ENCODE measurements at regions of chr14 and their contacts with region 1.

Region 1: DNA sequence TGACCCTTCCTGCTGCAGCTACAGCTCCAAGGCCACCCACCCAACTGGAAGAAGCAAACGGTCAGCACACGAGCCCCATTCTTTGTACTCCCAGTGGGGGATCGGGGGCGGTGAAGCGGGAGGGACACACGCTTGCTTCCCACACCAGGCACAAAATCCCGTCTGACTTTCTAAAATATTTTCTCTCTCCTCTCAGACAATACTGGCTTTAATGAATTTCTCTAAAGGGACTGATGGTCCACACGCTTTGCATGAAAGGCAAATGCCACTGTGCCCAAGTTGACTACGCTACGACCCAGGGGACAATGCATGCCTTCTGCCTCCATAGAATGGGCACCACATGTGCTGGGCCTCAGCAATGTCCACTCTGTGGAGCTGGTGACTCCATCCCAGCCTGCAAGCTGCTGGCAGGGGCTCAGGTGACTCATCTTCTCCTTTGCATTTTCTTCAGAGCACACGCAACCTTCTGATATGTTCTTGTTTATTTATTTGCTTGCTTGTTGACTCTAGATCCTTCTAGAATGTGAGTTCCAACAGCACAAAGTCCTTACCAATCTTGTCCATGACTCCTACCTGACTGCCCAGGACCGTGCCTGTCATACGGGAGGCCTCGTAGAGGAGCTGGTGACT is 15.6 kb downstream of the SYNE3 start:
- DNase-seq: no peak
- H3K4me3 ChIP-seq: no peak overlapping the region
- H3K4me3 Mint-ChIP-seq: peak overlapping the region; percentile 18
- H3K27ac Mint-ChIP-seq: peak overlapping the region; percentile 3
- H3K4me1 ChIP-seq: peaks cover 71% of the 10 kb centered on the region
- H3K4me1 Mint-ChIP-seq: peaks cover 38% of the 10 kb centered on the region
- H3K27me3 ChIP-seq: no peaks in the 10 kb centered on the region
- H3K27me3 Mint-ChIP-seq: no peaks in the 10 kb centered on the region
- CTCF ChIP-seq: no peak

Region 2: GRCh38 chr14:95452176-95452892 is 48.6 kb before region 1 on chr14:
- CTCF ChIA-PET with region 1: interaction called, 11 read pairs
- POLR2A ChIA-PET with region 1: no interaction called
- intact Hi-C with region 1: no loop called
- DNase-seq: peak in 1 of 2 experiments; percentile 36
- H3K4me3 ChIP-seq: no peak overlapping the region
- H3K4me3 Mint-ChIP-seq: no peak overlapping the region
- H3K27ac Mint-ChIP-seq: no peak overlapping the region
- H3K4me1 ChIP-seq: no peaks in the 10 kb centered on the region
- H3K4me1 Mint-ChIP-seq: no peaks in the 10 kb centered on the region
- H3K27me3 ChIP-seq: no peaks in the 10 kb centered on the region
- H3K27me3 Mint-ChIP-seq: no peaks in the 10 kb centered on the region
- CTCF ChIP-seq: peak; percentile 23 to 50

Region 3: GRCh38 chr14:95534299-95535225 is 33.7 kb after region 1 on chr14 and contains the start of gene GLRX5:
- CTCF ChIA-PET with region 1: no interaction called
- POLR2A ChIA-PET with region 1: interaction called, 18 read pairs
- intact Hi-C with region 1: no loop called
- DNase-seq: peak; percentile 98 to 100
- H3K4me3 ChIP-seq: peak within 1 kb of the TSS; percentile 83
- H3K4me3 Mint-ChIP-seq: peak within 1 kb of the TSS; percentile 87
- H3K27ac Mint-ChIP-seq: peak within 1 kb of the TSS; percentile 50
- H3K4me1 ChIP-seq: peaks cover 37% of the 10 kb centered on the region
- H3K4me1 Mint-ChIP-seq: peaks cover 25% of the 10 kb centered on the region
- H3K27me3 ChIP-seq: no peaks in the 10 kb centered on the region
- H3K27me3 Mint-ChIP-seq: no peaks in the 10 kb centered on the region
- CTCF ChIP-seq: no peak
- total RNA-seq, gene GLRX5: 66.2 and 67.8 TPM in 2 replicates

Region 4: DNA sequence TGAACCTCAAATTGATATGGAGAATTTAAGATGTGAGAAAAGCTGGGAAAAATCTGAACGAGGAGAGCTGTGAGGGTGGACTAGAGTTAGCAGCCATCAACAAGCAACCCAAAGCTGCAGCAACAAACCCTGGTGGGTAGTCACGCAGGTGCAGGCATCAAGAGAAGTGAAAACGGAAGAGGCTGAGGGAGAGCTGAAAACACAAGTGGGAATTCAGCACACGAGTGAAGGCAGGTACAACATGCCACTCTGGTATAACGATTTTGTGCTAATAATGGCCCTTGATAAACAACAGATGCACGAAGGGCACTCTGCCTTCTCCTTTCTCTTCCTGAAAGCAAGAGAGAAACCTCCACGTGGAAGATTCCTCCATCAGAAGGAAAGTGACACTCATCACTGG is 196.9 kb after region 1 on chr14:
- CTCF ChIA-PET with region 1: no interaction called
- POLR2A ChIA-PET with region 1: no interaction called
- intact Hi-C with region 1: no loop called
- DNase-seq: no peak
- H3K4me3 ChIP-seq: no peak overlapping the region
- H3K4me3 Mint-ChIP-seq: no peak overlapping the region
- H3K27ac Mint-ChIP-seq: no peak overlapping the region
- H3K4me1 ChIP-seq: no peaks in the 10 kb centered on the region
- H3K4me1 Mint-ChIP-seq: no peaks in the 10 kb centered on the region
- H3K27me3 ChIP-seq: no peaks in the 10 kb centered on the region; the same call in none of the 2 replicates
- H3K27me3 Mint-ChIP-seq: peaks cover 25% of the 10 kb centered on the region
- CTCF ChIP-seq: no peak

Region 5: DNA sequence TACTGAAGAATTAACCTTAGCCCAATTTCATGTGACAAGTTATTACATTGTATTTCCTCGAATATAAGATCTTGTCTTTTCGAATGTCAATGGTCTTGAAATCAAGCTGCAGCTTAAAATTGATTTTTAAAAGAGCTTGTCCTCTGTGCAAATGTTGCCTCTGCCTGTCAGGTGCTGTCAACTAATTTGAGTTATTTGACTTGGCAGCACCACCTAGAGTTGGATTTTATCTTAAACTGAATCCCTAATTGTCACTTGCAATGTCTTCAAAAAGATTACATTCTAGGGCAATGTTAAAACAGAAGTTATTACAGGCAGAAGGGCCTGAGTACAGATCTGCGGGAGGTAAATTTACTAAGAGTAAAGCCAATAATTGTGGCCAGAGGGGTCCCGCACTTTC is 349.5 kb after region 1 on chr14:
- CTCF ChIA-PET with region 1: no interaction called
- POLR2A ChIA-PET with region 1: no interaction called
- intact Hi-C with region 1: no loop called
- DNase-seq: no peak
- H3K4me3 ChIP-seq: no peak overlapping the region
- H3K4me3 Mint-ChIP-seq: no peak overlapping the region
- H3K27ac Mint-ChIP-seq: no peak overlapping the region
- H3K4me1 ChIP-seq: no peaks in the 10 kb centered on the region
- H3K4me1 Mint-ChIP-seq: no peaks in the 10 kb centered on the region
- H3K27me3 ChIP-seq: no peaks in the 10 kb centered on the region
- H3K27me3 Mint-ChIP-seq: peaks cover 20% of the 10 kb centered on the region
- CTCF ChIP-seq: no peak